GM18951 (cell line): ENCODE measurements at regions of chr6 and their contacts with region 1.

Region 1: GRCh38 chr6:88870717-88871330 is 92.6 kb downstream of the RNGTT start:
- POLR2A ChIP-seq: no peak

Region 2: DNA sequence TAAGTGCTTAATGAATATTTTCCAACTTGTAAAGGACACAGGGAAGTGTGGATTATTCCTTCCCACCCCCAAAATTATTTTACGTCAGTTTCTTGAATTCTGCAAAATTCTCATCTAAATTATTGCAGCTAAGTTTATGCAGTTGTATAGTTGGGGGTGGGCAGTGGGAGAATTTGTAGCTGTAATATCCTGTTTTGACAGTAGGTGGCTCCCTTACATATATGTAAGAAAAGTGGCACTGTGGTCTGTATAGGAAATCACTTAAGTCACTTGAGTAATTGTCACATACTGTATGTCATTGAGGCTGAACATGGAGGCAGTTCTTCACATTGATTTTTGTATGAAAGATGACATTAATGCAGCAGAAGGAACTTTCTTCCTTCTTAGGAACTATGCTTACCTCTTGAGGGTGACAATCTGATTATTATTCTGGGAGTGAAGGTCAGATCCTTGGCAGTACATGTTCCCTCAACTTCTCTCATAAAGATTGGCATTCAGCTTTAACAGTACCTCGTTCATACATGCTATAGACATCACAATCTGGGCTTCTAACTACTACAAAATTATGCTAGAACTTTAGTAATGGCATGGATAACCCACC is 1477.7 kb before region 1 on chr6:
- in situ Hi-C with region 1: loop called (anchors 25 kb)
- POLR2A ChIP-seq: no peak

Region 3: DNA sequence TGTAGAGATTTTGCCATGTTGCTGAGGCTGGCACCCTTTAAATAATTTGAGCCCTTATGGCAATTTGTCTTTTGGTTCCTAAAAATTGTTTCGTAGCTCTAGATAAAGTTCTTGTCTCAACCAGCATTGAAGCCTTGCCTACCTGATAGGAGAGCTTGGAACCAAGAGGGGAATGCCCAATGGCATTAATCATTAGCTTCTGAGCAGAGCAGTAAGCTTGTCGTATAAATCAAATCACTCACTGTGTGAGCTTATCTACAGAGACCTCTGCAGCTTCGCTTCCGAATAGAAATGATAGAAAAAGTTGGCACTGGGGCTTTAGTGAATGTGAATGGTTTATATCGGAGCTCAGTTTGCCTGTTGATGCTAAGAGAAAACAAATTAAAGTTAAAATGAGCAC is 572.8 kb after region 1 on chr6:
- in situ Hi-C with region 1: no loop called
- POLR2A ChIP-seq: no peak